Right cardiac atrium (tissue), 5 donors: ENCODE measurements at regions of chr5 and their contacts with region 1.

Region 1: GRCh38 chr5:9534881-9535517 is 10.9 kb downstream of the SEMA5A start:
- DNase-seq: peak; percentile 24 to 61 (median 44)
- ATAC-seq: peak; percentile 42 to 67
- H3K4me3 ChIP-seq: no peak overlapping the region
- H3K27ac ChIP-seq: peak overlapping the region; percentile 40
- H3K4me1 ChIP-seq: peaks cover 7% of the 10 kb centered on the region
- H3K27me3 ChIP-seq: no peaks in the 10 kb centered on the region

Region 2: GRCh38 chr5:9361835-9362234 is 173.2 kb before region 1 on chr5:
- intact Hi-C with region 1: loop called in 2 of 4 experiments (anchors 10 kb)
- DNase-seq: peak; percentile 21 to 57 (median 49)
- ATAC-seq: peak; percentile 28 to 59
- H3K4me3 ChIP-seq: no peak overlapping the region
- H3K27ac ChIP-seq: no peak overlapping the region
- H3K4me1 ChIP-seq: peaks cover 2% of the 10 kb centered on the region
- H3K27me3 ChIP-seq: no peaks in the 10 kb centered on the region